ENCODE measurements at regions of chr9 and their contacts with region 1.

Region 1: GRCh38 chr9:120477521-120478001 is 102.4 kb downstream of the CDK5RAP2 start:
- DNase-seq: peak; percentile 9 to 42 (median 39)
- H3K4me3 ChIP-seq: no peak overlapping the region
- H3K4me3 Mint-ChIP-seq: no peak overlapping the region
- H3K27ac ChIP-seq: no peak overlapping the region
- H3K27ac Mint-ChIP-seq: peak overlapping the region in 2 of 7 donors; percentile 12 to 64
- H3K4me1 ChIP-seq: peaks cover 34 to 43% of the 10 kb centered on the region in 2 donors
- H3K4me1 Mint-ChIP-seq: peaks cover 44% of the 10 kb centered on the region
- H3K27me3 ChIP-seq: no peaks in the 10 kb centered on the region
- H3K27me3 Mint-ChIP-seq: no peaks in the 10 kb centered on the region
- CTCF ChIP-seq: peak; percentile 98

Region 2: GRCh38 chr9:119556129-119556875 is 921.3 kb before region 1 on chr9:
- intact Hi-C with region 1: loop called (anchors 5 kb)
- DNase-seq: peak; percentile 1 to 19 (median 8)
- H3K4me3 ChIP-seq: no peak overlapping the region
- H3K4me3 Mint-ChIP-seq: peak overlapping the region; percentile 33 to 39
- H3K27ac ChIP-seq: no peak overlapping the region
- H3K27ac Mint-ChIP-seq: peak overlapping the region in 1 of 7 donors; percentile 62
- H3K4me1 ChIP-seq: peaks cover 0 to 4% of the 10 kb centered on the region in 2 donors
- H3K4me1 Mint-ChIP-seq: peaks cover 5% of the 10 kb centered on the region
- H3K27me3 ChIP-seq: no peaks in the 10 kb centered on the region
- H3K27me3 Mint-ChIP-seq: peaks cover 10 to 12% (median 10%) of the 10 kb centered on the region in 3 donors
- CTCF ChIP-seq: peak; percentile 80

Region 3: DNA sequence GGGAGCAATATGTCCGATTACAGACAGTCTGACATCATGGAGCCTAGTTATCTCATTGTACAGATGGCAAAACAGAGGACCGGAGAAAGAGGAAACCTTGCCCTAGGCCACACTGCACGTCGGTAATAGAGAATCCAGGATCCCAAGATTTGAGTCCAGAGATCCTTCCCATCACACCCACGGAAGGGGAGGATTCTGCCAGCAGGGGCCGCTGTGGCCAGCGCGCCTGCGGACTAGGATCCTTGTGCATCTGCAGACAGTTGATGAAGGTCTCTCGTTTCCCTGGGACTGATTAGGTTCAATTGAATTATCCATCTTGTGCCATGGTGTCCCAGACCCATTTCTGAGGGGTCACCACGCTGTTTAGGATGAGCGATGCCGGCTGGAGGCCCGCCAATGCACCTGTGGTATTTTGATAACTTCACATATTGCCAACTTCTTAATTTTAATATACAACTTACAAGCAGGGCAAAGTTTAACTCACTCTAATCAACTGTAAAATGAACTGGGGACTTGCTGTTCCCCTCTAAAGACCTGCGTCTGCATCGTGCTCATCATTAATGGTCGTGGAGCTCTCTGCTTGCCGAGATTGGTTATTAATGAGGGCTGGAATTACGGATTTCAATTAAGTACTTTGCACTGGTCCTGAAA is 515.7 kb before region 1 on chr9:
- intact Hi-C with region 1: loop called in 1 of 2 experiments (anchors 5 kb)
- DNase-seq: peak in 1 of 3 donors; percentile 8
- H3K4me3 ChIP-seq: no peak overlapping the region
- H3K4me3 Mint-ChIP-seq: no peak overlapping the region
- H3K27ac ChIP-seq: no peak overlapping the region
- H3K27ac Mint-ChIP-seq: no peak overlapping the region
- H3K4me1 ChIP-seq: no peaks in the 10 kb centered on the region
- H3K4me1 Mint-ChIP-seq: peaks cover 2% of the 10 kb centered on the region
- H3K27me3 ChIP-seq: no peaks in the 10 kb centered on the region
- H3K27me3 Mint-ChIP-seq: peaks cover 1 to 16% (median 3%) of the 10 kb centered on the region in 3 donors
- CTCF ChIP-seq: peak; percentile 66

Region 4: DNA sequence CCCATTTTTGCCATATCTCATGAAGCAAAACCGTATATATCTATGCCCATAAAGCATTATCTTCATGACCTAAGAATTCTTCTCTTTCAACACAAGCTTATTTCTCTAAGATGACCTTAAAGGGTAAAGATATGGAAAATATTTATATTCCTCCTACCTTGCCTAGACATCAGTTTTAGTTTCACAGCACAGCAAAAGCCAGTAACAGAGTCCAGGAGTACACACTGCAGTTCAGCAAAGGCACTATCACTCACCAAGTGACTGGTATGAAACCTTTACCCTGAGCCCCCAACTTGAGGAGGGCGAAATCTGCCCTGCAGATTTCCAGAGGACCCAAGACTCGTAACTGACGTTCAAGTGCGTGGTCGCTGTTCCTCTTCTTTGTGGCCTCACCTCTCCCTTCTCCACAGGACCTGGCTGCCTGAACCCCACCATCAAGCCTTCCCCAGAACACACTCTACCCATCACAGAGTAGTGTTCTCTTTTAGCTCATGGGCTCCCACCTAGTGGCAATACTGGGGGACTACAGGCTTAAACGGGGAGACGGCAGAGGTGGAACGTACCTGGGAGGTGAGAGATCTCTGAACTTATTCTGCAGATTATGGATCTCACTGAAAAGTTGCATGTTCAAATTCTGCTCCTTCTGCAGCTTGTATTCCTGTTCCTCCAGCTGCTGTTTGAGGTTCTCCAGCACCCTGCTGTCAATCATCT is 38.6 kb before region 1 on chr9:
- intact Hi-C with region 1: no loop called
- DNase-seq: no peak
- H3K4me3 ChIP-seq: no peak overlapping the region
- H3K4me3 Mint-ChIP-seq: no peak overlapping the region
- H3K27ac ChIP-seq: no peak overlapping the region
- H3K27ac Mint-ChIP-seq: peak overlapping the region in 1 of 7 donors; percentile 15
- H3K4me1 ChIP-seq: peaks cover 0 to 6% of the 10 kb centered on the region in 2 donors
- H3K4me1 Mint-ChIP-seq: peaks cover 22% of the 10 kb centered on the region
- H3K27me3 ChIP-seq: no peaks in the 10 kb centered on the region
- H3K27me3 Mint-ChIP-seq: peaks cover 0 to 2% (median 0%) of the 10 kb centered on the region in 3 donors
- CTCF ChIP-seq: peak; percentile 25